Activated CD4-positive, alpha-beta T cell treated with anti-CD3 and anti-CD28 coated beads for 36 hours (primary cell): ENCODE measurements at regions of chr20 and their contacts with region 1.

Region 1: GRCh38 chr20:64119681-64120341 is 12.4 kb upstream of the NPBWR2 start:
- DNase-seq: no peak
- ATAC-seq: peak; percentile 25
- H3K4me3 Mint-ChIP-seq: peak overlapping the region; percentile 41
- H3K27ac Mint-ChIP-seq: peak overlapping the region; percentile 66
- H3K4me1 Mint-ChIP-seq: peaks cover 10% of the 10 kb centered on the region
- H3K27me3 Mint-ChIP-seq: peaks cover 5% of the 10 kb centered on the region

Region 2: DNA sequence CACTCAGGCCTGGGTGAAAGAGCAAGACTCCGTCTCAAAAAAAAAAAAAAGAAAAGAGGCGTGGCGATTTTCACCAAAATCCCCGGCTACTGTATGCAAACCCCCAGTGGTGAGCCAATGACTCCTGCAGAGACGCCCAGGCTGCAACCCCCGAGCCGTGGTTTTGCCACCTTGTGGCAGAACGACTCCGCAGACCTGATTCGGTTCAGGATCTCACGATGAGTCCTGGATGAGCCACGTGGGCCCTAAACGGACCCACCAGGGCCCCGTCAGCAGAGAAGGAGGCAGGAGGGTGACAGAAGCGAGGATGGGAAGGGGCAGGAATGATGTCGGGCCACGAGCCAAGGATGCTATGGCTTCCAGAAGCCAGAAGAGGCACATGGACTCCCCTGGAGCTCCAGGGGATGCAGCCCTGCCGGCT is 337.8 kb before region 1 on chr20:
- CTCF ChIA-PET with region 1: no interaction called
- POLR2A ChIA-PET with region 1: no interaction called
- intact Hi-C with region 1: loop called in 1 of 2 experiments (anchors 2 kb)
- DNase-seq: peak; percentile 84
- ATAC-seq: peak; percentile 94
- H3K4me3 Mint-ChIP-seq: no peak overlapping the region
- H3K27ac Mint-ChIP-seq: peak overlapping the region; percentile 28
- H3K4me1 Mint-ChIP-seq: peaks cover 19% of the 10 kb centered on the region
- H3K27me3 Mint-ChIP-seq: no peaks in the 10 kb centered on the region

Region 3: DNA sequence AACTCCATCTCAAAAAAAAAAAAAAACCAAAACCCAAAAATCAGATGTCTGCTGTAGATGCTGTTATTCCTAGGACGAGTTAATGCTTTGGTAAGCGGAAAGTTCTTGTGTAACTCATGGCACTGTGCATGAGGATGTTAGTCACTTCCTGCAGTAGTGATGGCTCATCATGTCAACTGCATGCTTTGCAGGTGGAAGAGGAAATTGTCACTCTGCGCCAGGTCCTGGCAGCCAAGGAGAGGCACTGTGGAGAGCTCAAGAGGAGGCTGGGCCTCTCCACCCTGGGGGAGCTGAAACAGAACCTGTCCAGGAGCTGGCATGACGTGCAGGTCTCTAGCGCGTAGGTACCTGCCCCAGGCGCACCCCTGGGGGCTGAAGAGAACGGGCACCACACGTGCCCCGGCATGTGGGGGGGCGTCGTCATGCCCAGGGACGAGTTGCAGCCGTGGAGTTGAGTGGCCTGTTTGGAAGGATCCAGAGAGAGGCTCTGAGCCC is 246.3 kb before region 1 on chr20:
- CTCF ChIA-PET with region 1: no interaction called
- POLR2A ChIA-PET with region 1: no interaction called
- intact Hi-C with region 1: no loop called
- DNase-seq: peak; percentile 76
- ATAC-seq: peak; percentile 100
- H3K4me3 Mint-ChIP-seq: no peak overlapping the region
- H3K27ac Mint-ChIP-seq: peak overlapping the region; percentile 87
- H3K4me1 Mint-ChIP-seq: peaks cover 11% of the 10 kb centered on the region
- H3K27me3 Mint-ChIP-seq: no peaks in the 10 kb centered on the region

Region 4: GRCh38 chr20:63911176-63911575 is 208.6 kb before region 1 on chr20:
- CTCF ChIA-PET with region 1: no interaction called
- POLR2A ChIA-PET with region 1: no interaction called
- intact Hi-C with region 1: loop called in 1 of 2 experiments (anchors 10 kb)
- DNase-seq: no peak
- ATAC-seq: no peak
- H3K4me3 Mint-ChIP-seq: no peak overlapping the region
- H3K27ac Mint-ChIP-seq: no peak overlapping the region
- H3K4me1 Mint-ChIP-seq: peaks cover 31% of the 10 kb centered on the region
- H3K27me3 Mint-ChIP-seq: no peaks in the 10 kb centered on the region

Region 5: DNA sequence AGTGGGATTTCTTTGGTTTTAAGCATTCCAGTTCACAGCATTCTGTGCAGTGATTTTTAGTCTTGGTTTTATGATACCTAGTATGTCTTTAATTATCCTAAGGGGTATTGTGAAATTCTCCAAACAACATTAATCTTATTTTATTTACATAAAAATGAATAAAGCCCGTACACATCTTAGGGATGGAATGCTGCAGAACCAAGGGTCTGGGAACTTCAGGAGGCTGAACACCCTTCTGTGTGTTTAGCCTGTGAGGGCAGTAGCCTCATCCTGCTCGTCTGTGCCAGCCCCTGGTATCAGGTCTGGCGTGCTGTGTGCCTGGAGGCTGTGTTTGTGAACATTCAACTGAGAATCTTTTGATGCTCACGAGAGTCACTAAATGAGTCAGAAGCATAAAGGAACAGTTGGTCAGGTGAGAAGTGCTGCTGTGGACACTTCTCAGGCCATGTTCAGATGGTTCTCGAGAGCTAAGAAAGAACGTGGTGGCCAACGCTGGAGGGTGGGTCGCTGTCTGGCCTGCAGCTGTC is 109.0 kb before region 1 on chr20:
- CTCF ChIA-PET with region 1: no interaction called
- POLR2A ChIA-PET with region 1: no interaction called
- intact Hi-C with region 1: no loop called
- DNase-seq: no peak
- ATAC-seq: peak; percentile 33
- H3K4me3 Mint-ChIP-seq: no peak overlapping the region
- H3K27ac Mint-ChIP-seq: peak overlapping the region; percentile 83
- H3K4me1 Mint-ChIP-seq: peaks cover 32% of the 10 kb centered on the region
- H3K27me3 Mint-ChIP-seq: no peaks in the 10 kb centered on the region

Region 6: GRCh38 chr20:64038565-64039292 is 81.1 kb before region 1 on chr20:
- CTCF ChIA-PET with region 1: interaction called, 13 read pairs
- POLR2A ChIA-PET with region 1: no interaction called
- intact Hi-C with region 1: loop called (anchors 1 to 2 kb)
- DNase-seq: peak; percentile 89
- ATAC-seq: peak; percentile 70
- H3K4me3 Mint-ChIP-seq: peak overlapping the region; percentile 61
- H3K27ac Mint-ChIP-seq: no peak overlapping the region
- H3K4me1 Mint-ChIP-seq: peaks cover 48% of the 10 kb centered on the region
- H3K27me3 Mint-ChIP-seq: peaks cover 2% of the 10 kb centered on the region

Region 7: DNA sequence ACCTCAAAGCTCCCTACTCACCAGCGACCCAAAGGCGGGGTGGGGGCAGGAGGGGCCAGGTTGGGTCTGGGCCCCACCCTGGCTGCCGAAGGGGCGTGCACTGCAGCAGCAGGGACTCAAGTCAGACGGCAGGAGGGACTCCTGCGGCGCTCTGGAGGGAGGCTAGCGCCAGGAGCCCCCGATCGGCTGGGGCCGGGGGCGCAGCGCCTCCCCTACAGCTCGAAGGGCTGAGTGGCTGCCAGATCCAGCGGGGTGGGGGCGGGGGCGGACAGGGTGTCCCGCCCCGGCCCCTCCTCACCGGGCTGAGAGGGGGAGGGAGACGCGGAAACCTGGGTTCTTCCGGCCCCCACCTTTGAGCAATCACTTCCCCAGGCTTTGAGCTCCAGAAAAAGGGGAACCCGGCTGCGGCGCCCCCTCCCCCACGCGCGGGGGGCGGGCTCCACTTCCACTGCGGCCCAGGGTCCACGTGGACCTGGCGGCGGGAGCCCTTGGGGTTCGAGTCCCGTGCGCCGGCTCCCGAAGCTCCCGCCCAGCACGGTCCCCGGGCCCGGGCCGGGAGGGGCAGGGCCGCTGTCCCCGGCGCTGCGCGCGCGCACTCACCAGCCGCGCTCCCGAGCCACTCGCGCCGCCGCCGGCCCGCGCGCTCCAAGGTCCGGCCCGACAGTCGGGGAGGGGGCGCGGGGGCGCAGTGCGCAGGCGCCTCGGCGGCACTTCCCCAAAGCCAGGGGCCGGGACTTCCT is 40.4 kb before region 1 on chr20 and contains the start of gene RGS19:
- CTCF ChIA-PET with region 1: interaction called, 23 read pairs
- POLR2A ChIA-PET with region 1: no interaction called
- intact Hi-C with region 1: loop called (anchors 1 kb)
- DNase-seq: peak; percentile 77
- ATAC-seq: peak; percentile 43
- H3K4me3 Mint-ChIP-seq: peak within 1 kb of the TSS; percentile 90
- H3K27ac Mint-ChIP-seq: peak within 1 kb of the TSS; percentile 88
- H3K4me1 Mint-ChIP-seq: peaks cover 28% of the 10 kb centered on the region
- H3K27me3 Mint-ChIP-seq: peaks cover 3% of the 10 kb centered on the region
- total RNA-seq, gene RGS19: 39.6 to 40.2 TPM

Region 8: GRCh38 chr20:64101731-64102621 is 17.8 kb before region 1 on chr20:
- CTCF ChIA-PET with region 1: interaction called, 15 read pairs
- POLR2A ChIA-PET with region 1: interaction called, 3 read pairs
- intact Hi-C with region 1: loop called in 1 of 2 experiments (anchors 1 kb)
- DNase-seq: peak; percentile 85
- ATAC-seq: peak; percentile 81
- H3K4me3 Mint-ChIP-seq: peak overlapping the region; percentile 58
- H3K27ac Mint-ChIP-seq: no peak overlapping the region
- H3K4me1 Mint-ChIP-seq: peaks cover 23% of the 10 kb centered on the region
- H3K27me3 Mint-ChIP-seq: peaks cover 13% of the 10 kb centered on the region

Region 9: GRCh38 chr20:64106981-64107735 is 12.7 kb before region 1 on chr20 and contains the start of gene NPBWR2:
- CTCF ChIA-PET with region 1: interaction called, 15 read pairs
- POLR2A ChIA-PET with region 1: interaction called, 3 read pairs
- intact Hi-C with region 1: loop called in 1 of 2 experiments (anchors 1 kb)
- DNase-seq: peak; percentile 56
- ATAC-seq: peak; percentile 66
- H3K4me3 Mint-ChIP-seq: no peak within 1 kb of the TSS
- H3K27ac Mint-ChIP-seq: no peak within 1 kb of the TSS
- H3K4me1 Mint-ChIP-seq: peaks cover 4% of the 10 kb centered on the region
- H3K27me3 Mint-ChIP-seq: peaks cover 5% of the 10 kb centered on the region
- total RNA-seq, gene NPBWR2: not detected